CD4-positive, alpha-beta T cell (primary cell): ENCODE measurements at regions of chr14 and their contacts with region 1.

Region 1: DNA sequence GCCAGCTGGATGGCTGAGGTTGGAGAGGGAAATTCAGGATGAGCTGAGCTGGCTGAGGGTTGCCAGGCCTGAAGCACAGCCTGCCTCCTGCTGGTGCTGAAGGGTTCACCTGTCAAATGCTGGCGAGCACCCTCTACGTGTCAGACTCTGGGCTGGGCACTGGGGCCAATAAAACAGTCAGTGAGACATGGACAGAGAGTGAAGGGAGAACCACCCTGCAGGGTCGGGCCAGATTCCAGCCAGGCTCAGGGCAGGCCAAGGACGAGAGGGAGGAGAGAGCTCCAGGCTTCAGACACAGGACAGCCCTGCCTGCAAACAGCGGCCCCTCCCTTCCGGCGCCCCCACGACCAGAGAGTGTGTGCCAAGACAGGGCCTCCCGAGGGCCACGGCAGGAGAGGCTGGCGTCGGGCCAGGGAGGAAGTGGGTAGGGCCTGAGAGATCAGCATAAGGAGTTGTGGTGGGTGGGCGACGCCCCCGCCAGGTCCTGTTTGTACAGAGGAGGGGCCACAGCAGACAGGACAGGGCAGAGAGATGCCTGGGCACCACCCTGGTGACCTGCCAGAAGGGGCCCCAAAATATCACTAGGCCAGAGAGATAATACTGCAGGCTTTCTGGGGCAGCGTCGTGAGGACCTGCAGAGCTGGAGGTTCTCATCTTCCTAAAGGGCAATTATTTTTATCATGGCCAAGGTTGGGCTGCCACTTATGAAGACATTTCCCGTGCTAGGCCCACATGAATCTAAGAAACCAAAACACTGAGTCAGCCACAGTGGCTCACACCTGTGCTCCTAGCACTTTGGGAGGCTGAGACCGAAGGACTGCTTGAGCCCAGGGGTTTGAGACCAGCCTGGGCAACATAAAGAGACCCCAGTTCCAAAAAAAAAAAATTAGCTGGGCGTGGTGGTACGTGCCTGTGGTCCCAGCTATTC is 73.1 kb upstream of the GPR68 start:
- DNase-seq: peak; percentile 56 to 94 (median 85)
- ATAC-seq: peak; percentile 52
- H3K4me3 ChIP-seq: peak overlapping the region; percentile 1
- H3K4me3 Mint-ChIP-seq: peak overlapping the region; percentile 85
- H3K27ac ChIP-seq: peak overlapping the region; percentile 89 to 91
- H3K27ac Mint-ChIP-seq: peak overlapping the region; percentile 97
- H3K4me1 ChIP-seq: peaks cover 99% of the 10 kb centered on the region
- H3K4me1 Mint-ChIP-seq: peaks cover 77% of the 10 kb centered on the region
- H3K27me3 ChIP-seq: no peaks in the 10 kb centered on the region
- H3K27me3 Mint-ChIP-seq: no peaks in the 10 kb centered on the region
- CTCF ChIP-seq: peak; percentile 36

Region 2: DNA sequence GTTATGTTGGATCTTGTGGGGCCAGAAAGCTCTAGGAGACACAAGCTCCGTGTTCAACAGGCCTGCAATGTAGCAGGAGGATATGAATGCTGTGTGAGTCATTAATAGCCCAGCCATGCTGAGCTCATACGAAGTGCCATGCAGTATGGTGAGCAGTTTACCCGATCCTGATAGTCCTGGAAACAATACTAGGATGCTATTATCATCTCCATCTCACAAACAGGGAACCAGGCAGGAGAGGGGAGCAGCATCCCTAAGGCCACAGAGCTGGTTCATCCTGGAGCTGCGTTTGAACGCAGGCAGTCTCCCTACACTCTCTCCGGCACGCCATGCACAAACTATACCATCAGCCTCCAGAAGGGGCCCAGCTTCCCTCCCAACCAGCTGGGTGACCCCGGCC is 521.9 kb before region 1 on chr14:
- CTCF ChIA-PET with region 1: no interaction called
- POLR2A ChIA-PET with region 1: no interaction called
- intact Hi-C with region 1: no loop called
- DNase-seq: no peak
- ATAC-seq: no peak
- H3K4me3 ChIP-seq: no peak overlapping the region
- H3K4me3 Mint-ChIP-seq: no peak overlapping the region
- H3K27ac ChIP-seq: no peak overlapping the region
- H3K27ac Mint-ChIP-seq: no peak overlapping the region
- H3K4me1 ChIP-seq: no peaks in the 10 kb centered on the region
- H3K4me1 Mint-ChIP-seq: no peaks in the 10 kb centered on the region
- H3K27me3 ChIP-seq: no peaks in the 10 kb centered on the region
- H3K27me3 Mint-ChIP-seq: no peaks in the 10 kb centered on the region
- CTCF ChIP-seq: no peak

Region 3: DNA sequence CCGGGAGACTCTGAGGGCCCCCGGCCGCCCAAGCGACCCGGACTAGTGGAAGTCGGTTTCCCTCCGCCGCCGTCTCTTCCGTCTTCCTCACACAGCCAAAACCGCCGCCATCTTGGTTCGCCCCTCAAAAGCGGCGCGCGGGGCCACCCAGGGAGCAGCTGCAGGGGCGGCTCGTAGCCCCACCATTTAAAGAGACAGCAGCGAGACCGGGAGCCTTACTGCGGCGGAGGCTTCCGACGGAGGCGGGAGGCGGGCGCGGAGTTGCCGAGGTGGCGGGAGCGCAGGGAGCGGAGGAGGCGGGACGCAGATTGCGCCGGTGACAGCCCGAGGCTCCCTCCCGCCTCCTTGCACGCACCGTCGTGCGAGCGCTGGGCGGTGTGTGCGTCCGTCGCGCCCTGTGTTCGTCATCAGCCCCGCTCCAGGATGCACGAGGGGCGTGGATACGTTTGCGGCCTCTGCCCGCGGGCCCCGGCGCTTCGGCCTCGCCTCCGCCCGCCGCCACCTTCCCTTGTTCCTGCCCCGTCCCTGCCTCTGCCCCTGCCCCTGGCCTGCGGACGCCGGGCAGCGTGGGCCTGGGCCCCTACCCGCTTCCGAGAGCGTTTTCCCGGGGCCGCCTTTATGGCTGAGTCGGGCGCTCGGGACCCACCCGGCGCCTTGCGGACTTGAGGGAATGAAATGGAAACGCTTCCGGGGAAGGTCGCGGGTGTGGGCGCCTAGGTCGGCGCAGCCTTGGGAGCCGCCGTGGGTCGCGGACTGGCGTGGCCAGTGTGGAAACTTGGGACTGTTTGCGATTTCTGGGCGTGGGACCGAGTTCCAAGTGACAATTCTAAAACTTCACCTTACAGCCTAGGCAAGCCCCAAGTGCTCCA is 192.8 kb after region 1 on chr14 and contains the start of gene PPP4R3A:
- CTCF ChIA-PET with region 1: no interaction called
- POLR2A ChIA-PET with region 1: interaction called, 7 read pairs
- intact Hi-C with region 1: loop called in 1 of 2 experiments (anchors 5 kb)
- DNase-seq: peak; percentile 82 to 98 (median 90)
- ATAC-seq: peak; percentile 85
- H3K4me3 ChIP-seq: peak within 1 kb of the TSS; percentile 90
- H3K4me3 Mint-ChIP-seq: peak within 1 kb of the TSS; percentile 100
- H3K27ac ChIP-seq: peak within 1 kb of the TSS; percentile 99
- H3K27ac Mint-ChIP-seq: peak within 1 kb of the TSS; percentile 100
- H3K4me1 ChIP-seq: peaks cover 23% of the 10 kb centered on the region
- H3K4me1 Mint-ChIP-seq: peaks cover 44% of the 10 kb centered on the region
- H3K27me3 ChIP-seq: no peaks in the 10 kb centered on the region
- H3K27me3 Mint-ChIP-seq: no peaks in the 10 kb centered on the region
- CTCF ChIP-seq: no peak
- total RNA-seq, gene PPP4R3A: 189 to 205 TPM